Mammary epithelial cell (primary cell): ENCODE measurements at regions of chr5 and their contacts with region 1.

Region 1: DNA sequence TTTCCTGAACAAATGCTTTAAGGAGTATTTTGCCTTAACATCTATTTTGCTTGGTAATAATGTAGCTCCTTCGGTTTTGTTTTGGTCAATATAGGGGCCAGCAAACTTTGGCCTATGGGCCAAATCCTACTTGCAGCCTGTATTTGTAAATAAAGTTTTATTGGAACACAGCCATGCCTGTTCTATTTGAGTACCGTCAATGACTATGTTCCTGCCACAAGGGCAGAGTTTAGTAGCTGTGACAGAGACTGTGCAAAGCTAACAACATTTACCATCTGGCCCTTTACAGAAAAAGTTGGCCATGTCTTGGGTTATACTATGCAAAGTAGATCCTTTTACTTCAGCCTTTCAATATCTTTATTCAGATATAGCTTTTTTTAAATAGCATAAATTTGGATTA is 113.4 kb downstream of the NR3C1 start:
- DNase-seq: no peak
- H3K4me3 ChIP-seq: no peak overlapping the region
- H3K27ac ChIP-seq: no peak overlapping the region
- H3K4me1 ChIP-seq: no peaks in the 10 kb centered on the region
- H3K27me3 ChIP-seq: no peaks in the 10 kb centered on the region
- CTCF ChIP-seq: no peak

Region 2: DNA sequence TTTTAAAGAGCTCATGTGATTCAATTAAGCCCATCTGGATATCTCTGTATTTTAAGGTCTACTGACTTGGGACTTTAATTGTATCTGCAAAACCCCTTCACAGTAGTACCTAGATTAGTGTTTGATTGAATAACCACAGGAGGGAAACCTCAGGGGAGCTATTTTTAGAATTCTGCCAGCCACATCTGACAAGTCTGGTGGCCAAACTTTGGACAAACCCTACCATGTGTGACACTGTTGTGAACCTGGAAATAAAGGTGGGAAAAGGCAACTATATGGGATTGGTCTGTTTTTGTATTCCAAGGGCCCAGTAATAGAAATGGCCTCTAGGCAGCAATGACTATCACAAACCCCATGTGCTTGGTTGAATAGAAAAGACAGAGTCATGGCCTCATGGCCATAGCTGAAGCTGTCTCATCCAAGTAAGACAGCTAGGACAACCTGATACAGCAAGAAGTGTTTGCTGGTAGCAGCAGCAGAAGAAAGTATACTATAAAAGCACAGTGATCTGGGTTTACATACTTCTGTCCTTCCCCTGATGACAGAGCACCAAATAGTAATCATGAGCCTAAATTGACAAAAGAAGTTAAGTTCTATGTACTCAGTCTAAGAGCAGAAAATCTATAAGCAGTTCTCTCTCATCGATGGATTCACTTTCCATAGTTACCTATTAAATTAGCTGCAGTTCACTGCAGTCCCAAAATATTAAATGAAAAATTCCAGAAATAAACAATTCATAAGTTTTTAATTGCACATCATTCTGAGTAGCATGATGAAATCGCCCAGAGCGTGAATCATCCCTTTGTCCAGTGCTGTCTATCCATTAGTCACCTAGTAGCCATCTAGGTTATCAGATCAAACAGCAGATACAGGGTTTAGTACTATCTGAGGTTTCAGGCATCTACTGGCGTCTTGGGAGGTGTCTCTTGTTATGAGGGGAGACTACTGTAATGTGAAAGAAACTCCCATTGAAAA is 330.2 kb before region 1 on chr5:
- CTCF ChIA-PET with region 1: no interaction called
- dilution Hi-C with region 1: no loop called
- in situ Hi-C with region 1: no loop called
- intact Hi-C with region 1: loop called (anchors 5 kb)
- DNase-seq: peak; percentile 88
- H3K4me3 ChIP-seq: no peak overlapping the region
- H3K27ac ChIP-seq: peak overlapping the region; percentile 70
- H3K4me1 ChIP-seq: peaks cover 20% of the 10 kb centered on the region
- H3K27me3 ChIP-seq: no peaks in the 10 kb centered on the region
- CTCF ChIP-seq: no peak

Region 3: GRCh38 chr5:143341807-143342570 is 51.9 kb after region 1 on chr5:
- CTCF ChIA-PET with region 1: no interaction called
- dilution Hi-C with region 1: no loop called
- in situ Hi-C with region 1: no loop called
- intact Hi-C with region 1: no loop called
- DNase-seq: peak; percentile 73
- H3K4me3 ChIP-seq: no peak overlapping the region
- H3K27ac ChIP-seq: peak overlapping the region; percentile 55
- H3K4me1 ChIP-seq: peaks cover 19% of the 10 kb centered on the region
- H3K27me3 ChIP-seq: no peaks in the 10 kb centered on the region
- CTCF ChIP-seq: no peak